ENCODE measurements at regions of chr10 and their contacts with region 1.

Region 1: DNA sequence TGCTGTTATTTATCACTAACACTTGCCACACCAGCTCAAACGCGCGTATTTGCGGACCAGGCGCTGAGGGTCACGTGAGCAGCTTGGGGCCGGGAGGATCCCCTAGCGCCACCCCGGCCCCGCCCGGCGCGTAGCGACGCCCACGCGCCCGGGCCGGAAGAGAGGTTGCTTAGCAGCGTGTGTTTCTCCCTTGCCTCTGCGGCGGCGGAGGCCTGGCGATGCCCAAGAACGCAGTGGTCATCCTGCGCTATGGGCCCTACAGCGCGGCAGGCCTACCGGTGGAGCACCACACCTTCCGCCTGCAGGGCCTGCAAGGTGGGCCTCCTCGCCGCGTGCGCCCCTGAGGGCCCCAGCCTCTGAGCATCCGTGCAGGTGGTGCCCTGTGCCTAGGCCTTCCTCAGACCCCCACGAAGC is at the start of gene C10orf53:
- DNase-seq: no peak
- H3K4me3 ChIP-seq: no peak within 1 kb of the TSS
- H3K27ac ChIP-seq: no peak within 1 kb of the TSS
- H3K4me1 ChIP-seq: no peaks in the 10 kb centered on the region
- CTCF ChIP-seq: no peak
- total RNA-seq, gene C10orf53: not detected in 2 replicates

Region 2: DNA sequence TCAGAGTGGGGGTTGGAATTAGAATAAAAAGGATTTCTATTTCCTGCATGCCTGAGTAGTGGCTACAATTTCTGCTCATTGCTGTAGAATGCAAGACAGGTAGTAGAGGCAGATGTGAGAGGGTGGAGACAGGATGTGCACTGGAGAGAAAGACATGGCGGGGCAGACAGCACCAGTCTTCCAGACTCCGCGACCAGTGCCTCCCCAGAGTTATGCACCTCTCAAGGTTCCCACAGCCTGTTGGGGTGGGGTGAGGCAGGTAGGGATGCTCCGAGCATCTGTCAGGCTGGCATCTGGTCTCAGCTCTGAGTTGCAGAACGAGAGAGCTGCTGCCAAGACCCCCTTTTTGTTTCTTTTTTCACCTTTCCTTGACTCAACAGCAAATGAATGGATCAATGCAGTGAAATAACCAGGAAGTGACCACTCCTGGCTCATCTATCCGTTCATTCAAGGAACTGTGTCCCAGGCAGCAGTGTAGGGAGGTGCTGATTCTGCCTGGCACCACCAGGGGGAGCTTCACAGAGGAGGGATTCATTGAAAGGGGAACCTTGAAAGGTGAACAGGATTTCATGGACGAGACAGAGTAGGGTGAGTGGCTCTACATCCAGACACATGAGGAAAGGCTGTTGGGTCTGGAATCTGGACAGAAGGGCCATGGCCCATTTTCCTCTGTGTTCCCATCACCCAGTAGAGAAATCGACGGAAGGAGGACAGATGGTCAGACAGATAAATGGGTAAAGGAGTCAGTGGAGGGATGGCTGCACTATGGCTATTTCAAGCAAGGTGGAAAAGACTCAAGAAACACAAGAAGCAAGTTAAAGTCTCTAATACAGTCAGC is 86.5 kb before region 1 on chr10:
- CTCF ChIA-PET with region 1: no interaction called
- POLR2A ChIA-PET with region 1: no interaction called
- intact Hi-C with region 1: no loop called
- DNase-seq: peak; percentile 58
- H3K4me3 ChIP-seq: no peak overlapping the region
- H3K27ac ChIP-seq: no peak overlapping the region
- H3K4me1 ChIP-seq: no peaks in the 10 kb centered on the region
- CTCF ChIP-seq: peak; percentile 88

Region 3: DNA sequence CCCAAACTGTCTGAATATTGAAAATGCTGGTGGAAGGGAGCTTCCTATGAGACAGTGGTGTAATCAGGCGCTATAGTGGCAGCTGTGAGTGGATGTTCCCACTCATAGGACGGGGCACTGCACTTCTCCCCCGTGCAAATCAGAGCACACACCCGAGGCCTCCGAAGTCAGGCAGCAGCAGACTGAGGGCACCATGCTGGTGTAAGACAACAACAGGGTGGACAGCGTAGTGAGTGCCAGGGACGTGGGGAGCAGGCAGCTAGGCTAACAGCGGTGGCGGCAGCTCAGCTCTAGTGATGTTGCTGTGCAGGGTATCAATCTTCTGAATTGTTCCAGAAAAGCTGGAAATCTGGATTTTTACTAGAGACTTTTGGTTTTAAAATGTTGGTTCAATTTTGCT is 19.2 kb after region 1 on chr10:
- CTCF ChIA-PET with region 1: no interaction called
- POLR2A ChIA-PET with region 1: interaction called, 12 read pairs
- intact Hi-C with region 1: no loop called
- DNase-seq: no peak
- H3K4me3 ChIP-seq: no peak overlapping the region
- H3K27ac ChIP-seq: no peak overlapping the region
- H3K4me1 ChIP-seq: no peaks in the 10 kb centered on the region
- CTCF ChIP-seq: no peak

Region 4: DNA sequence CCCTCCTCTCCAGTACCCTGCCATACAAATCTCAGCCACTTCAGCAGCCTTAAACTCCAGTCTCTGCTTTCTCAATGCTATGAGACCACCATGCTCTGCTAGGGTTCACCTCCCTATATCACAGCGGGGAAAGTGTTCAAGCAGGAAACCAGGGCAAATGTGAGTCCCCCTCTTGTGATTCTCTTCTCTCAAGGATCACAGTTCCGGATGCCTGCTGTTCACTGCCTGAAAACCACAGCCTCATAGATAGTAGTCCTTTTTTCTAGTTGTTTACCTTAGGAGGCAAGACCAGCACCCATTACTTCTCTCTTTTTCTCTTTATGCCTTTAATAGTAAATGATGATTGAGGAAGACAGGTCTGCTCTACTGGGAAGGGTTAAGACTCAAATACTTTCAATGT is 843.4 kb after region 1 on chr10:
- CTCF ChIA-PET with region 1: no interaction called
- POLR2A ChIA-PET with region 1: no interaction called
- intact Hi-C with region 1: no loop called
- DNase-seq: no peak
- H3K4me3 ChIP-seq: no peak overlapping the region
- H3K27ac ChIP-seq: no peak overlapping the region
- H3K4me1 ChIP-seq: no peaks in the 10 kb centered on the region
- CTCF ChIP-seq: no peak